AG04449 (cell line): ENCODE measurements at regions of chr14 and their contacts with region 1.

Region 1: GRCh38 chr14:23275412-23275811 is 10.5 kb downstream of the HOMEZ start:
- DNase-seq: no peak
- H3K4me3 ChIP-seq: no peak overlapping the region
- CTCF ChIP-seq: no peak

Region 2: DNA sequence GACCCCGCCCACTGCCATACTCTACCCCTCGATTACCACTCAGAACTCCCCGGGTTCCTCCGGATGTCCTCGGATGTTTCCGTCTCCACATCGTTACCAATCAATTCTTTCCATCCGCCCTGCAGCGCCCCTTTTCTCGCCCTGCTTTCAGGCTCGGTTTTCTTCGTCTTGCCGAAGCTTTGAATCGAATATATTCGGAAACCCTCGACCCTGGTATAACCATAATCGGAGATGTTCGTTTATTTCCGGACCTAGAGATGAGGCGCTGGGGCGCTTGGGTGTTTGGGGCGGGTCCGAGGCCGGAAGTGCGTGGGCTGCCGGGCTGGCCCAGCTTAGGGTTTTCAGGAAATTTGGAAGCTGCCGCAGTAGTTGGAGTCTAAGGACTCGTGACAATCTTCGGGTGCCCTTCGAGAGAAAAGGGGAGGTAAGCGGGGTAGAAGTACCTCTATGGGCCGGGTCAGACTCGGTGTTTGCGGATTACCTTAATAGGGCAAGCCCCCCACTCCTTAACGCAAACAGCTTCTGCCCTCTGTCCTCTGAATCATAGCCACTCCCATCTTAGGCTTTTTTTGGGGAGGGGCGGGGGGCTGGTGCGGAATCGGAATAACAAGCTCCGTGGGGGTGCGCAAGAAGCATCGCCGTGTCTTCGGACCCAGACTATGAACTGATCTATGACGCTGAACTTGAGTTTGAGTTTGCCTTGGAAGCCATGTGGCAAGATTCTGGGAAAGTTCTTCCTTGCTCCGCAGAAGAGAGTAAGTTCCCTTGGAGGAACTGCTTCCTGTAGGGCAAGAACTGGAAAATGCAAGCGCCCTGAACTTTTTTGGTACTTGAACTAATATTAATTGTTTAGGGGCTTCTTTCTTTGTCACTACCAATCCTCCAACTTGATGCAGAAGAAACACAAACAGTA is 180.0 kb before region 1 on chr14 and contains the start of gene C14orf119:
- CTCF ChIA-PET with region 1: no interaction called
- POLR2A ChIA-PET with region 1: no interaction called
- DNase-seq: peak; percentile 95
- H3K4me3 ChIP-seq: peak within 1 kb of the TSS; percentile 100
- CTCF ChIP-seq: no peak

Region 3: DNA sequence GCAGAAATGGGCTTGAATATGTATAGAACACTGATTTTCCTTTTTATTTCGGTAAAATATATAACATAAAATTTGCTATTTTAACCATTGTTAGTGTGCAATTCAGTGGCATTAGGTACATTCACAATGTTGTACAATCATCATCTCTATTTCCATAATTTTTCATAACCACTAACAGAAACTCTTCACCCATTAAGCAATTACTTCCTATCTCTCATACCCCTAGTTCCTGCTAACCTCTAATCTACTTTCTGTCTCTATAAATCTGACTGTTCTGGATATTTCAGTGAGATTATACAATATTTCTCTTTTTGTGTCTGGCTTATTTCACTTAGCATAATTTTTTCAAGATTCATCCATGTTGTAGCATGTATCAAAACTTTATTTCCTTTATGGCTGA is 46.6 kb before region 1 on chr14:
- CTCF ChIA-PET with region 1: no interaction called
- POLR2A ChIA-PET with region 1: no interaction called
- DNase-seq: no peak
- H3K4me3 ChIP-seq: no peak overlapping the region
- CTCF ChIP-seq: no peak

Region 4: DNA sequence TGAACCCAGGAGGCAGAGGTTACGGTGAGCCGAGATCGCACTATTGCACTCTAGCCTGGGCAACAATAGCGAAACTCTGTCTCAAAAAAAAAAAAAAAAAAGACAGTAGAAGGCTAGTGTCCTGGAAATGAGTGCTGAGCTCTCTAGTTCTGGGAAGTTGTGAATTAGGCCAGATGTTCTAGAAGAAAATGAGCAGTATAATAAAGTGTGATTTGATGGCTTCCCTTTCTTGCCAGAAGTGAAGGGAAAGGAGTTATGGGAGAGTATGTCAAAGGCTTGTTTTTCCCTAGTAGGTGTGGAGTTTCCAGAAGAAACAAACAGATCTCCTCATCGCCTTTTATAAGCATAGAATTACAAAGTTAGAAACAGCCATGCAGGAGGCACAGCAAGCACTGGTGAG is 17.2 kb before region 1 on chr14:
- CTCF ChIA-PET with region 1: interaction called, 23 read pairs
- POLR2A ChIA-PET with region 1: no interaction called
- DNase-seq: no peak
- H3K4me3 ChIP-seq: no peak overlapping the region
- CTCF ChIP-seq: no peak

Region 5: GRCh38 chr14:23286020-23286905 is 10.9 kb after region 1 on chr14 and contains the start of gene HOMEZ:
- CTCF ChIA-PET with region 1: interaction called, 23 read pairs
- POLR2A ChIA-PET with region 1: interaction called, 4 read pairs
- DNase-seq: peak; percentile 81
- H3K4me3 ChIP-seq: peak within 1 kb of the TSS; percentile 83
- CTCF ChIP-seq: peak; percentile 23